IMR-90 (cell line): ENCODE measurements at regions of chr10 and their contacts with region 1.

Region 1: DNA sequence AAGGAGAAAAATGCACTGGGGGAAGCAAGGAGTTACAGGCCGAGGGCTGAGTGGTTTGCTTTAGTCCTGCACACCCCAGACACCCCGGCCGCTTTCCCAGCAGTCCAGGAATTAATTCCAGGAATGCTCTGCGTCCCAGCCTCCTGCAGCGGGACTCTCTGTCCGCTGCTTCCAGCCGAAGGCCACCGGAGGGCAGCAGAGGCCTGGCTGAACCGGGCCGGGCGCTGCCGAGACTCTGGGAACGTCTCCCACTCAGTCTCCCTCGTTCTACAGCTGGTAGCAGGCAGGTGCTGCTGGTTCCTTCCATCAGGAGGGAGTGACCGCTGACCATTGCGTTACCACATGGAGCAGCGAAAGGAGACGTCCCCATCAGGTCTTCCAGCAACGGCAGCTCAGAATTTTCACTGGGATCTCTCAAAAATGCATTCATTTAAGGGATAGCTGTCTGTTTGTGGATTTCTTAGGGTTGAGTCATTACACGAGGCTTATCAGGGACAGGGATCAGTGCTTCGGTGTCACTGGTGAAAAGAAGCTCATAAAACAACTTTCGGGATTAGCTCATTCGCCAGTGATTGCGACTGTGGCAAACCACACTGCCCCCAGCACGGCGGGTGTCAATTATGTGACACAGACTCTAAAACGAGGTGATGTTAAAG is 24.9 kb upstream of the PITRM1 start:
- DNase-seq: peak; percentile 84
- ATAC-seq: peak; percentile 91
- H3K4me3 ChIP-seq: peak overlapping the region; percentile 37
- H3K27ac ChIP-seq: peak overlapping the region; percentile 12
- H3K4me1 ChIP-seq: peaks cover 10% of the 10 kb centered on the region
- H3K27me3 ChIP-seq: peaks cover 9% of the 10 kb centered on the region
- CTCF ChIP-seq: peak; percentile 95
- POLR2A ChIP-seq: peak; percentile 66
- RAD21 ChIP-seq: peak; percentile 98

Region 2: DNA sequence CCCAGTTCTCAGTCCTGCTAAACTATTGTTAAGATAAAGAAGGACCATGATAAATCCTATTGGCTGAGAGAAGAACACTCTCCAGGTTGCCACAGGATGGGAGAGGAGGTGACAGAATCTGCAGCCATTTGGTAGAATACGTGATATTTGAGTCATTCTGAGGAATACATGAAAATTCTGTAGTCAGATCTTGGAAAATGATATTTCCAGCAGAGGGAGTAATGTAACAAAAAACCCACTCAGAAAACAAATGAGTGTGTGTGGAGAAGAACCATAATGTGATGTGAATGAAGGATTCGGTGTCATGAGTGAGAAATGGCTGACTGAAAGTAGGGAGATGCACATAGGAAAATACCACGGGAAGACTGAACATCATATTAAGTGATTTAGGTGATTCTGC is 258.6 kb before region 1 on chr10:
- CTCF ChIA-PET with region 1: no interaction called
- POLR2A ChIA-PET with region 1: no interaction called
- dilution Hi-C with region 1: no loop called
- in situ Hi-C with region 1: no loop called
- intact Hi-C with region 1: no loop called
- DNase-seq: peak; percentile 21
- ATAC-seq: peak; percentile 29; the same call in 1 of the 2 replicates
- H3K4me3 ChIP-seq: no peak overlapping the region
- H3K27ac ChIP-seq: no peak overlapping the region
- H3K4me1 ChIP-seq: 0 out of 2 replicates have a peak, but pooled peaks cover 2% of the 10 kb centered on the region
- H3K27me3 ChIP-seq: peaks cover 15% of the 10 kb centered on the region
- CTCF ChIP-seq: peak; percentile 35
- POLR2A ChIP-seq: no peak
- RAD21 ChIP-seq: peak; percentile 41

Region 3: DNA sequence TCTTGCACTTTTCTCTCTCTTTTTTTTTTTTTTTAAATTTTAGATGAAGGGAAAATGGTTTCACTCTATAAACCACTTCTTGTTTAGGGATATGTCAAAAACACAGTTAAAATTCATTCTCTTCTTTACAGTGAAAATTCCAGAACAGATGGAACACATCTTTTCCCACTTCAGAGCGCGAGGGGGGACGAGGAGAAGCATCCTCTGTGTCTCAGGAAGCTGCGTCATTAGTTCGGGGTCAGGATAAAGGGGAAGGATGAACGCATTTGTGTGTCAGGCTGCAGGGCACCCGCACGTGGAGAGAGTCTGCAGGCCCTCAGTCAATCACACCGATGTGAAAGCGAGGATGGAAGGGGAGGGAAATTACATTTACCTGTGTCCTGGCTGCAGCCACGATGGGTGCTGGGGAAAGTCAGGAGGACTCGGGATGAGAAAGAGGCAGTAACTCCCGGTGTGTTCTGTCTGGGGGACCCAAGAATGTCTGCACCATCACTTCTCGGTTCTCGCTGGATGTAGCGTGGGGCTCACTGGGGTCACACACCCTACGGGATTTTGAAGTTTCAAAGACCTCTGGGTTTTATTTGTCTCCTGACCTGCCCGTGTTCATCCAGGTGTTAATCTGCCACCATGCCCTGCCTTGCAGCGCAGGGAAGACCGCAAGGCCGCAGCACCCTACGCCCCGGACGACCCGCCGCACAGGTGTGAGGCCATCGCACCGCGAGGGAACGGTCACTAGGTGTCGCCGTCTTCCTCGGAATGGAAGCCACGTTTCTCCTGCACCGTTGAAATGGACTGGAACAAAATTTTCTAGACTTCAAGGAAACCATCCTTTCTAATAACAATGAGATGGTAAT is 41.8 kb after region 1 on chr10:
- CTCF ChIA-PET with region 1: no interaction called
- POLR2A ChIA-PET with region 1: no interaction called
- dilution Hi-C with region 1: no loop called
- in situ Hi-C with region 1: no loop called
- intact Hi-C with region 1: loop called (anchors 2 kb)
- DNase-seq: peak; percentile 68
- ATAC-seq: peak; percentile 94
- H3K4me3 ChIP-seq: no peak overlapping the region
- H3K27ac ChIP-seq: peak overlapping the region; percentile 77; the same call in 1 of the 2 replicates
- H3K4me1 ChIP-seq: peaks cover 9% of the 10 kb centered on the region; the same call in 1 of the 2 replicates
- H3K27me3 ChIP-seq: no peaks in the 10 kb centered on the region
- CTCF ChIP-seq: peak; percentile 91
- POLR2A ChIP-seq: 0 out of 2 replicates have a peak, but pooled peaks have one; percentile 25
- RAD21 ChIP-seq: peak; percentile 99